T-cell (primary cell): ENCODE measurements at regions of chrX and their contacts with region 1.

Region 1: DNA sequence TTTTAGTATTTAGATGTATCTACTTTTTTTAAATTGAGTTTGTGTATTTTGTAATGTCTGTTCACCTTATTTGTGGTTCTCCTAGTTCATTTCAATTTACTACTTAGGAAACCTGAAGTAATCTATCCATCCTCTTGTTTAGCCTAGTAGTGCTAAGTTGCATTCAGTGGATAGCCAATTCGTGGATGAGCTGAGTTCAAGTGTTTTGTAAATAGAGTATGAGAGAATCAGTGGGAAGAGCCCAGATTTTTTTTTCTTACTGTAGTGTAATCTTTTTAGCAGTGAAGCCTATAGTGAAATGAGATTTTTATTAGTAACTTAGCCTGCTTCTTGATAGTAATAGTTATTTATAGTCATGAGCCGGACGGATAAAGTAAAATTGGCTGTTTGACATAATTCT is 21.7 kb downstream of the STAG2 start:
- DNase-seq: no peak
- ATAC-seq: no peak
- H3K4me3 ChIP-seq: no peak overlapping the region
- H3K4me3 Mint-ChIP-seq: peak overlapping the region in 1 of 3 donors; percentile 64
- H3K27ac ChIP-seq: no peak overlapping the region
- H3K27ac Mint-ChIP-seq: peak overlapping the region in 1 of 2 donors; percentile 39
- H3K4me1 ChIP-seq: peaks cover 0 to 14% of the 10 kb centered on the region in 2 experiments
- H3K4me1 Mint-ChIP-seq: peaks cover 53 to 73% (median 61%) of the 10 kb centered on the region in 3 donors
- H3K27me3 ChIP-seq: no peaks in the 10 kb centered on the region
- H3K27me3 Mint-ChIP-seq: no peaks in the 10 kb centered on the region

Region 2: DNA sequence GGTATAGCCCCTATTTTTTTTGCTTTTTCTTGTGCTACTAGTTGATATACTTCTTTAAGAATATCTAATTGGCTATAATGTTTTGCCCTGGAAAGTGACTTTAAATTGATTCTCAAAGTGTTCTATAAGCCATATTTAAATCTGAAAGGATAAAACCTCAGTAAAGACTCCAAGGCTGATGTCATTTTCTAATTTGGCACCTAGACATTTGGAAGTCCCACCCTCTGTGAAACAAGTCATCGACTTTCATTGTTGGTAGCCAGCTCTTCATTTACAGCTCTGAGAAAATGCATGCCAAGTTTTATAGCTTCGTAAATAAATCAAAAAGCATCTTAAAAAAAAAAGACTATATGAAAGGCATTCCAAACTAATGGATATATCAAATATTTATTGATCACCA is 39.8 kb before region 1 on chrX:
- CTCF ChIA-PET with region 1: no interaction called
- POLR2A ChIA-PET with region 1: no interaction called
- DNase-seq: no peak
- ATAC-seq: no peak
- H3K4me3 ChIP-seq: no peak overlapping the region
- H3K4me3 Mint-ChIP-seq: no peak overlapping the region
- H3K27ac ChIP-seq: no peak overlapping the region
- H3K27ac Mint-ChIP-seq: no peak overlapping the region
- H3K4me1 ChIP-seq: no peaks in the 10 kb centered on the region
- H3K4me1 Mint-ChIP-seq: no peaks in the 10 kb centered on the region
- H3K27me3 ChIP-seq: no peaks in the 10 kb centered on the region
- H3K27me3 Mint-ChIP-seq: peaks cover 0 to 9% of the 10 kb centered on the region in 2 donors

Region 3: DNA sequence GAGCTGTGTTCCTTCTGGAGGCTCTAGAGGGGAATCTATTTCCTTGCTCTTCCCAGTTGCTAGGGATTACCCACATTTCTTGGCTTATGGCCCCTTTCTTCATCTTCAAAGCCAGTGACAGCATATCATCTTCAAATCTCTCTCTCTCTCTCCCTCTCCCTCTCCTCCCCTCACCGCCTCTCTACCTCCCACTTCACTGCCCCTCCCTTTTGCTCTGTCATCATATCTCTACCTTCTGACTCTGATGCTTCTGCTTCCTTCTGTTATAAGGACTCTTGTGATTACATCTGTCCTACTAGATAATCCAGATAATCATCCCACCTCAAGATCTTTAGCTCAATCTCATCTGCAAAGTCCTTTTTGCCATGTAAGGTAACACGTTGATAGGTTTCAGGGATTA is 256.1 kb after region 1 on chrX:
- CTCF ChIA-PET with region 1: interaction called in 1 of 2 experiments, 12 read pairs
- POLR2A ChIA-PET with region 1: no interaction called
- DNase-seq: peak in 1 of 35 experiments; percentile 33
- ATAC-seq: peak in 3 of 4 experiments; percentile 44 to 58 (median 53)
- H3K4me3 ChIP-seq: no peak overlapping the region
- H3K4me3 Mint-ChIP-seq: peak overlapping the region; percentile 39 to 59 (median 53)
- H3K27ac ChIP-seq: peak overlapping the region; percentile 38
- H3K27ac Mint-ChIP-seq: peak overlapping the region in 1 of 2 donors; percentile 12
- H3K4me1 ChIP-seq: peaks cover 0 to 11% of the 10 kb centered on the region in 2 experiments
- H3K4me1 Mint-ChIP-seq: peaks cover 25 to 45% (median 42%) of the 10 kb centered on the region in 3 donors
- H3K27me3 ChIP-seq: no peaks in the 10 kb centered on the region
- H3K27me3 Mint-ChIP-seq: peaks cover 0 to 16% of the 10 kb centered on the region in 2 donors